CD8-positive, alpha-beta T cell (primary cell): ENCODE measurements at regions of chr10 and their contacts with region 1.

Region 1: GRCh38 chr10:104121520-104122224 is at the start of gene SFR1:
- DNase-seq: peak; percentile 98 to 100 (median 99)
- ATAC-seq: peak; percentile 90
- H3K4me3 ChIP-seq: peak within 1 kb of the TSS; percentile 95 to 98
- H3K4me3 Mint-ChIP-seq: peak within 1 kb of the TSS; percentile 95
- H3K27ac ChIP-seq: peak within 1 kb of the TSS; percentile 98 to 99
- H3K27ac Mint-ChIP-seq: peak within 1 kb of the TSS; percentile 99
- H3K4me1 ChIP-seq: peaks cover 19% of the 10 kb centered on the region
- H3K4me1 Mint-ChIP-seq: peaks cover 29% of the 10 kb centered on the region
- H3K27me3 ChIP-seq: no peaks in the 10 kb centered on the region
- H3K27me3 Mint-ChIP-seq: peaks cover 6% of the 10 kb centered on the region
- CTCF ChIP-seq: peak; percentile 50
- total RNA-seq, gene SFR1: 6.2 to 6.8 TPM

Region 2: DNA sequence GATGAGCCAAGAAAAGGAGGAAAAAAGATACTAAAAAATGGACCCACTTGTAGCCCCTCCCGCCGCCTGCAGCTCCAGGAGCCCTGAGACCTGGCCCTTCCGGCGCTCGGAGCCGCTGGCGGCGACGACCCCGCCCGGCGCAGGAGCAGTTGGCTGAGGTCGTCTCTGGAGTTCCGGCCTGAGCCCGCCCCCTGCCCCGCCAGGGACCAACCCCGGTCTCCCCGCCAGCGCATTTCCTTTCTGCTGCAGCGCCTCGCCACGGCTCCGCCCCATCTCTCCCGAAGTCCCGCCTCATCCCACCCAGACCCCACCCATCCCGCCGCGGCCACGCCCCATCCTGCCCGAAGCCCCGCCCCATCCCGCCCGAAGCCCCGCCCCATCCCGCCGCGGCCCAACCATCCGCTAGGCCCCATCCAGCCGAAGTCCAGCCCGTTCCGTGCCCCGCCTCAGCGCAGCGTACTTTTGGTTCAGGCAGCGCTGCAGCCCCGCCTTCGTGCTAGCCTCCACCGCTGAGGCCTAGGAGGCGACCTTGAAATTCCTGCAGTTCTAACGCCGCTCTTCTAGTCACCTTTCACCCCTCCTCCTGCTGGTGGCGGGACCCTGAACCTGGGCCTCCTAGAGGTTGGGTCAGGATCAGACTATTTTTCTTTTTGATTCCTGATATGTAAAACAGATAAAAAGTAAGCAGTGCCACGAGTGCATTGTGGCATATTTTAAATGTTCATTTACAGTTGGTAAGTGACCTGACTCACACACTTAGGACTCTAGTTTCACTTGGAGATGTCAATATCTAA is 203.4 kb before region 1 on chr10 and contains the start of gene STN1:
- CTCF ChIA-PET with region 1: interaction called, 5 read pairs
- POLR2A ChIA-PET with region 1: interaction called, 7 read pairs
- intact Hi-C with region 1: loop called (anchors 1 kb)
- DNase-seq: peak; percentile 85 to 98 (median 95)
- ATAC-seq: peak; percentile 92
- H3K4me3 ChIP-seq: peak within 1 kb of the TSS; percentile 85 to 86
- H3K4me3 Mint-ChIP-seq: peak within 1 kb of the TSS; percentile 98
- H3K27ac ChIP-seq: peak within 1 kb of the TSS; percentile 79 to 88
- H3K27ac Mint-ChIP-seq: peak within 1 kb of the TSS; percentile 97
- H3K4me1 ChIP-seq: peaks cover 36% of the 10 kb centered on the region
- H3K4me1 Mint-ChIP-seq: peaks cover 40% of the 10 kb centered on the region
- H3K27me3 ChIP-seq: no peaks in the 10 kb centered on the region
- H3K27me3 Mint-ChIP-seq: no peaks in the 10 kb centered on the region
- CTCF ChIP-seq: no peak
- total RNA-seq, gene STN1: 14.2 to 14.8 TPM

Region 3: DNA sequence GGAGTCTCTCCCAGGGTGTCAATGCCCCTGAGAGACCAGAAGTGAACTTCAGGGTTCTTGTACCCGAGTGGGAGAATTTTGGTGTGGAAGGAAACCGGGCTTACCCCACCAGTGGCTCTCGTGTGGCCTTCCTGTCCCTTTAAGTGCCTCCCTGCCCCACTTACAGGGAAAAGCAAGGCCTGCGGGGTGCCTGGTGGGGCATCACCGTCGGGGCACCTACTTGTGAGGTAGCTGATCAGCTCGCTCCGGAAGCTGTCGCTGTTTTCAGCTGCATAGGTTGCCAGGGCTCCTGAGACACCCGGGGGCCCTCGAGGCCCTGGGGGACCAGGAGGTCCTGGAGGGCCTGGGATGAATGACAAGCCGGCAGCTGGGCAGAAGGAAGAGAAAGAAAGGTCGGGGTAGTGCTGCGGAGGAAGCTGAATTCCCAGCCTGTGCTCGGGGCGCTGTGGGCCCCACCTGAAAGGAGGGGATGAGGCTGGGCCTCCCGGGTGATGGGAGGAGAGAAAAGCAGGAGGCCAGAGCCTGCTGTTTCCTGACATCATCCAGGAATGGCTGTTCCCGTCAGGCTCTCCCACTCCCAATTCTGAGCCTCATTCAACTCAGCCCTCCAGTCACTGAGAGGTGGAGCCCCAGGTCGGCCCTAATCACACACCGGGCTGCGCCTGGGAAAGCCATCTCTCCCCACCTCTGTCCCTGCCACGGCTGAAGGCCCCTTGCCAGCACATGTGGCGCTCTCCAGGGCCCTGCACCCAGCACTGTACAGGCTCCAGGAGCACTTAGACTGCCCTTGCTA is 87.1 kb before region 1 on chr10:
- CTCF ChIA-PET with region 1: interaction called, 5 read pairs
- POLR2A ChIA-PET with region 1: interaction called, 10 read pairs
- intact Hi-C with region 1: no loop called
- DNase-seq: peak in 1 of 9 experiments; percentile 45
- ATAC-seq: no peak
- H3K4me3 ChIP-seq: no peak overlapping the region
- H3K4me3 Mint-ChIP-seq: no peak overlapping the region
- H3K27ac ChIP-seq: no peak overlapping the region
- H3K27ac Mint-ChIP-seq: no peak overlapping the region
- H3K4me1 ChIP-seq: no peaks in the 10 kb centered on the region
- H3K4me1 Mint-ChIP-seq: no peaks in the 10 kb centered on the region
- H3K27me3 ChIP-seq: no peaks in the 10 kb centered on the region
- H3K27me3 Mint-ChIP-seq: no peaks in the 10 kb centered on the region
- CTCF ChIP-seq: no peak

Region 4: GRCh38 chr10:104190695-104191094 is 69.0 kb after region 1 on chr10:
- CTCF ChIA-PET with region 1: no interaction called
- POLR2A ChIA-PET with region 1: no interaction called
- intact Hi-C with region 1: no loop called
- DNase-seq: no peak
- ATAC-seq: no peak
- H3K4me3 ChIP-seq: no peak overlapping the region
- H3K4me3 Mint-ChIP-seq: no peak overlapping the region
- H3K27ac ChIP-seq: no peak overlapping the region
- H3K27ac Mint-ChIP-seq: no peak overlapping the region
- H3K4me1 ChIP-seq: no peaks in the 10 kb centered on the region
- H3K4me1 Mint-ChIP-seq: no peaks in the 10 kb centered on the region
- H3K27me3 ChIP-seq: no peaks in the 10 kb centered on the region
- H3K27me3 Mint-ChIP-seq: peaks cover 14% of the 10 kb centered on the region
- CTCF ChIP-seq: no peak

Region 5: GRCh38 chr10:104231784-104232612 is 110.3 kb after region 1 on chr10 and contains the start of gene CFAP43:
- CTCF ChIA-PET with region 1: no interaction called
- POLR2A ChIA-PET with region 1: no interaction called
- intact Hi-C with region 1: loop called (anchors 1 to 5 kb)
- DNase-seq: peak; percentile 98 to 100 (median 99)
- ATAC-seq: peak; percentile 99
- H3K4me3 ChIP-seq: peak within 1 kb of the TSS; percentile 64 to 67
- H3K4me3 Mint-ChIP-seq: peak within 1 kb of the TSS; percentile 87
- H3K27ac ChIP-seq: peak within 1 kb of the TSS in 1 of 2 experiments; percentile 52
- H3K27ac Mint-ChIP-seq: peak within 1 kb of the TSS; percentile 79
- H3K4me1 ChIP-seq: peaks cover 4% of the 10 kb centered on the region
- H3K4me1 Mint-ChIP-seq: peaks cover 10% of the 10 kb centered on the region
- H3K27me3 ChIP-seq: peaks cover 0 to 10% of the 10 kb centered on the region in 2 experiments
- H3K27me3 Mint-ChIP-seq: peaks cover 9% of the 10 kb centered on the region
- CTCF ChIP-seq: no peak
- total RNA-seq, gene CFAP43: not detected

Region 6: GRCh38 chr10:104337974-104338735 is 216.5 kb after region 1 on chr10 and contains the start of gene ITPRIP:
- CTCF ChIA-PET with region 1: no interaction called
- POLR2A ChIA-PET with region 1: no interaction called
- intact Hi-C with region 1: loop called in 1 of 2 experiments (anchors 5 kb)
- DNase-seq: peak; percentile 47 to 89 (median 76)
- ATAC-seq: peak; percentile 67
- H3K4me3 ChIP-seq: peak within 1 kb of the TSS; percentile 92 to 98
- H3K4me3 Mint-ChIP-seq: peak within 1 kb of the TSS; percentile 93
- H3K27ac ChIP-seq: peak within 1 kb of the TSS; percentile 92 to 93
- H3K27ac Mint-ChIP-seq: peak within 1 kb of the TSS; percentile 97
- H3K4me1 ChIP-seq: peaks cover 46% of the 10 kb centered on the region
- H3K4me1 Mint-ChIP-seq: peaks cover 54% of the 10 kb centered on the region
- H3K27me3 ChIP-seq: no peaks in the 10 kb centered on the region
- H3K27me3 Mint-ChIP-seq: no peaks in the 10 kb centered on the region
- CTCF ChIP-seq: no peak
- total RNA-seq, gene ITPRIP: 212 to 214 TPM

Region 7: GRCh38 chr10:105104297-105104696 is 982.6 kb after region 1 on chr10:
- CTCF ChIA-PET with region 1: no interaction called
- POLR2A ChIA-PET with region 1: no interaction called
- intact Hi-C with region 1: no loop called
- DNase-seq: no peak
- ATAC-seq: no peak
- H3K4me3 ChIP-seq: no peak overlapping the region
- H3K4me3 Mint-ChIP-seq: no peak overlapping the region
- H3K27ac ChIP-seq: no peak overlapping the region
- H3K27ac Mint-ChIP-seq: no peak overlapping the region
- H3K4me1 ChIP-seq: no peaks in the 10 kb centered on the region
- H3K4me1 Mint-ChIP-seq: no peaks in the 10 kb centered on the region
- H3K27me3 ChIP-seq: no peaks in the 10 kb centered on the region
- H3K27me3 Mint-ChIP-seq: no peaks in the 10 kb centered on the region
- CTCF ChIP-seq: no peak